B cell (primary cell): ENCODE measurements at regions of chr13 and their contacts with region 1.

Region 1: DNA sequence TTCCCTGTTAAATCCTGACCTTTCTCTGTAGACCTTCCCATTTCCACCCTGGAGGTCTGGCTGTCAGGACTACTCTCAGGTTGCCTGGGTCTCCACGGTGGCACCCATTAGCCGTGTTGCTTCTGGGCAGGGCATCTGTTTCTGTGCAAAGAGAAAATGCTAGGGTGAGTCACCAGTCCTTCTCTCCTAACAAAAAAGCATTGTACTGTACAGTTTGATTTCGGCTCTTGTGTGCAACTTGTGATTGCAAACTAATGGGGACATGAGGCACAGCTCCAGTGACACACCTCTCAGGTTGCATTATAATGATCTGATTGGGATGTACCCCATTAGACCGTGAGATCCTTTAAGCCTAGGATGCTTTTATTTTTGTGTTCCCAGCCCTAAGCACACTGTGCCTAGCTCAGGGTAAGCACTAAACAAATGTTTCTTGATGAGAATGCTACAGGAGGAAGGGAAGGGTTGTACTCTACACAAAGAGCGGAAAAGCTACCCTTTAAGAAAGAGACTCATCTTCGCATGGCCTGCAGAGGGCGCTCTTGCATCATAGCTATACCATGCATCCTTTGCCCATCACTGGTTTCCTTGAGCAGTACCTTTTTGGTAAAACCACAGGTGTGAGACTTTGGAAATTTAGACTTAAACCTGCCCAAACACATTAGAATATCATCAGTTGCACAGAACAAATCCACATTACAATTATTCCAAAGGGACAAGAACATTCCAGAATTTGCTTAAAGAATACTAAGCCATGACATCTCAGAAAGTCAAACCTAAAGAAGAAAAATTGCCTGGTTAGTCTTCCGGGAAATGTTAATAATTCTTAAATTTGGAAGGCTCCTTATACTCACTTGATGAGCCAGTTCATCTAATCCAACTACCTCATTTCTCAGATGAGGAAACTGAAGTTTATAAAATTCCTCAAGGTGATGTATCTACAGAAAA is 20.3 kb upstream of the TRIM13 start:
- DNase-seq: peak; percentile 86
- ATAC-seq: peak; percentile 78
- H3K4me3 ChIP-seq: no peak overlapping the region
- H3K4me3 Mint-ChIP-seq: no peak overlapping the region
- H3K27ac ChIP-seq: no peak overlapping the region
- H3K27ac Mint-ChIP-seq: no peak overlapping the region
- H3K4me1 ChIP-seq: peaks cover 0 to 4% of the 10 kb centered on the region in 2 donors
- H3K4me1 Mint-ChIP-seq: peaks cover 4% of the 10 kb centered on the region
- H3K27me3 ChIP-seq: no peaks in the 10 kb centered on the region
- H3K27me3 Mint-ChIP-seq: no peaks in the 10 kb centered on the region
- CTCF ChIP-seq: peak; percentile 98

Region 2: DNA sequence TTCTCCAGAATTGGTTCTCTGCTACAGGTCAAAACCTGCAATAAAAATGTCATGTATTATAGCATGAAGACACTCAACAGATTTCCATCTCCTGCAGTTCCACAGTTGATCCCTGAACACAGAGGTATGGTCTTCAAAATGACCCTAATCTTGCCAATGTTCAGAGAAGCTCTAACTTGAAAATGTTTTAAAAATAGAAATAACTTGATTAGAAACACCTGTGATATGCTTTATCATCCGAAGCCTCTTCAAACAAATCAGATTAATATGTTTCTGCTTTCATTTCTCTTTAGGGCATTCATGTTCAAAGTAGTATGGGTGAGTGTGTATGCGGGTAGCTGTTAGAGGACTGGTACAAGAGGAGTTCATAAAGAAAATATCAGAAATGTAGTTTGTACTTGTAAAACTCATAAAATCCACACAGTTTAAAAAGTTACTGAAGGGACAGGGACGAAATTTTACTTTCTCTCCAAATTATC is 99.1 kb after region 1 on chr13:
- CTCF ChIA-PET with region 1: interaction called, 10 read pairs
- POLR2A ChIA-PET with region 1: no interaction called
- intact Hi-C with region 1: loop called (anchors 5 kb)
- DNase-seq: peak; percentile 59
- ATAC-seq: peak; percentile 38
- H3K4me3 ChIP-seq: peak overlapping the region in 3 of 5 experiments; percentile 5 to 60 (median 8)
- H3K4me3 Mint-ChIP-seq: peak overlapping the region; percentile 78
- H3K27ac ChIP-seq: peak overlapping the region; percentile 35 to 74
- H3K27ac Mint-ChIP-seq: peak overlapping the region; percentile 76
- H3K4me1 ChIP-seq: peaks cover 10 to 57% of the 10 kb centered on the region in 2 donors
- H3K4me1 Mint-ChIP-seq: peaks cover 54% of the 10 kb centered on the region
- H3K27me3 ChIP-seq: no peaks in the 10 kb centered on the region
- H3K27me3 Mint-ChIP-seq: no peaks in the 10 kb centered on the region
- CTCF ChIP-seq: no peak

Region 3: GRCh38 chr13:50123862-50124536 is 147.4 kb after region 1 on chr13:
- CTCF ChIA-PET with region 1: interaction called, 14 read pairs
- POLR2A ChIA-PET with region 1: no interaction called
- intact Hi-C with region 1: no loop called
- DNase-seq: peak; percentile 84
- ATAC-seq: peak; percentile 62
- H3K4me3 ChIP-seq: peak overlapping the region; percentile 77 to 98 (median 98)
- H3K4me3 Mint-ChIP-seq: peak overlapping the region; percentile 92
- H3K27ac ChIP-seq: peak overlapping the region; percentile 73 to 98
- H3K27ac Mint-ChIP-seq: peak overlapping the region; percentile 96
- H3K4me1 ChIP-seq: peaks cover 50 to 54% of the 10 kb centered on the region in 2 donors
- H3K4me1 Mint-ChIP-seq: peaks cover 64% of the 10 kb centered on the region
- H3K27me3 ChIP-seq: peaks cover 0 to 12% (median 6%) of the 10 kb centered on the region in 4 experiments
- H3K27me3 Mint-ChIP-seq: peaks cover 7% of the 10 kb centered on the region
- CTCF ChIP-seq: no peak

Region 4: DNA sequence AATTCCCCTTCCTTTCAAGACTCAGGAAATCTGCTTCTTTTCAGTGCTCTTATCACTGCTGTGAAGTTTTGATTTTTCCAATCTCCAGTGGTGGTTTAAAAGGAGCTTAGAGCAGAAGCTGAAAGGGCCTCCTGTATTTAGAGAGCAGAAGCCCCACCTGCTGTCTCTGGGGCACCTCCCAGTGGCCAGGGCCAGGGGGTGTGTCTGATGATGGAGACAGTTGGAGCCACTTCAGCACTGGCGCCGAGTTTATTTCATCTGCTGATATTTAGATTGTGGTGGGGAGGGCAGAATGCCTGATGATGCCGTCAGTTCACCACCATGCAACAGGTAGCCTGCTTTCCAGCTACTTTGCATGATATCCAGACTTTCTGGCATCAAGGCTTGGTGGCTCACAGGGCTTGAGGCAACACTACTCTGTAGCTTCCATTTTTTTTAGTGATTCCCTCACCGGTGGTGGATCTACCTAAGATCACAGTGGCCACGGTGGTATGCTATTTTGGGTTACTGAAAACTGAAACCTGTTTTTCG is 410.5 kb after region 1 on chr13:
- CTCF ChIA-PET with region 1: interaction called, 5 read pairs
- POLR2A ChIA-PET with region 1: no interaction called
- intact Hi-C with region 1: loop called (anchors 1 kb)
- DNase-seq: peak; percentile 46
- ATAC-seq: peak; percentile 71
- H3K4me3 ChIP-seq: no peak overlapping the region
- H3K4me3 Mint-ChIP-seq: no peak overlapping the region
- H3K27ac ChIP-seq: no peak overlapping the region
- H3K27ac Mint-ChIP-seq: no peak overlapping the region
- H3K4me1 ChIP-seq: no peaks in the 10 kb centered on the region
- H3K4me1 Mint-ChIP-seq: peaks cover 7% of the 10 kb centered on the region
- H3K27me3 ChIP-seq: no peaks in the 10 kb centered on the region
- H3K27me3 Mint-ChIP-seq: no peaks in the 10 kb centered on the region
- CTCF ChIP-seq: peak; percentile 42

Region 5: DNA sequence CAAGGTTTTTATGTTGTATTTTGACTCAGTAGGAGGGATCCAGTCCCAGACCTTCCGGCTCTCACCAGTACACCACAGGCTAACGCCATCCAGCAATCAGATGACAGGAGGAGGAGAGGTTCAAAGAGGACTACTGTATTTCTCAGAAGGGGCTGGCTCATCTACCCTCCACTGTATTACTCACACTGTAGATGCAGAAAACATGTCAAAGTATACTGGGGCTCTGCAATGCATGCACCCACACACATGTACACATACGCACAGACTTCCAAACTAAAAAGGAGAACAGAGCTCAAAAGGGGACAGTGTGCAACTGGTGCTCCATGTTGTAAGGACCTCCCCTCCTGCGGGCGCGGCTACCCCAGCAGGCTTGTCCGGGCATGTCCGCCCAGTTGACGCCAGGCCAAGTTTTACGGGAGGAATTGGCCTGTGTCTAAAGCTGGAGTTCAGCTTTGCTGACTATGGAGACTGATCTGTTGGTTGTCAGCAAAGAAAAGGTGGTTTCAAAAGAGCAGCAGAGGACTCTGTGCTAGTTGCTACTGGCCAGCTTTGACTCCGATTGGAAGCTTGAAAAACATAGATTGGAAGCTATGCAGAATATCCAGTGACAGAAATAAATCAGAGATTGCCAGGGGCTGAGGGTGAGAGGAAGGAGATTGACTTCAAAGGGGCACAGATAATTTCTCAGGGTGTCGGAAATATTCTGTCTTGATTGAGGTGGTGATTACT is 552.7 kb after region 1 on chr13:
- CTCF ChIA-PET with region 1: interaction called, 7 read pairs
- POLR2A ChIA-PET with region 1: no interaction called
- intact Hi-C with region 1: loop called (anchors 2 kb)
- DNase-seq: no peak
- ATAC-seq: no peak
- H3K4me3 ChIP-seq: no peak overlapping the region
- H3K4me3 Mint-ChIP-seq: no peak overlapping the region
- H3K27ac ChIP-seq: no peak overlapping the region
- H3K27ac Mint-ChIP-seq: no peak overlapping the region
- H3K4me1 ChIP-seq: peaks cover 24 to 25% of the 10 kb centered on the region in 2 donors
- H3K4me1 Mint-ChIP-seq: peaks cover 35% of the 10 kb centered on the region
- H3K27me3 ChIP-seq: no peaks in the 10 kb centered on the region
- H3K27me3 Mint-ChIP-seq: no peaks in the 10 kb centered on the region
- CTCF ChIP-seq: no peak

Region 6: DNA sequence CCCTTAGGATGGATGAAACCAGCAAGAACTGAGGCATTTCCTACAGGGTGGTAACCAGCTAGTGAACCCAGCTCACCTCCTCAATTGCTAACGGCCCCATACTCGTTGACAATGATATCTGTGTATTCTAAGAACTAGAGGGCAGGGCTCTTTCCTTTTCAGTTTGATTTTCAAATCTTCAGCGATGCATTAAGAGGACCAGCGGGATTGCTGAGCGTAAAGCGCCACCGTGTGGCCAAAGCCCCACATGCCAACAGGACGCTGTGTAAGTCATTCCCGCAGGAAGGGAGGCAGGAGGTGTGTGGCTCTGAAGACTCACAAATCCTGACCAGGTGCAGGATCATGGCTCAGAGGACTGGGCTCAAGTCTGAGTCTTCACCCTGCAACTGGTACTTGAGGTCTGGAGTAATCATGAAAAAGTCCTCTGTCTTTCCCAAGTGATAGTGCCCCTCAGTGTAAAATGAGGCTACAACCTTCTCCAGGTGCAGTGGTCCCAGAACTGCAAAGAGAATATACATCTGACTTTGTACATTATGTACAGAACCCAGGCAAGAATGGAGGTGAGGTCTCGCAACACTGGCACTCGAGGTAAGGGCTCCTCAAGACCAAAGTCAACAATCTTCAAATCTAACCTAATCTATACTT is 1093.5 kb after region 1 on chr13:
- CTCF ChIA-PET with region 1: interaction called, 85 read pairs
- POLR2A ChIA-PET with region 1: no interaction called
- intact Hi-C with region 1: no loop called
- DNase-seq: peak; percentile 83
- ATAC-seq: peak; percentile 91
- H3K4me3 ChIP-seq: no peak overlapping the region
- H3K4me3 Mint-ChIP-seq: no peak overlapping the region
- H3K27ac ChIP-seq: no peak overlapping the region
- H3K27ac Mint-ChIP-seq: no peak overlapping the region
- H3K4me1 ChIP-seq: peaks cover 11 to 19% of the 10 kb centered on the region in 2 donors
- H3K4me1 Mint-ChIP-seq: peaks cover 12% of the 10 kb centered on the region
- H3K27me3 ChIP-seq: peaks cover 0 to 20% (median 10%) of the 10 kb centered on the region in 4 experiments
- H3K27me3 Mint-ChIP-seq: peaks cover 30% of the 10 kb centered on the region
- CTCF ChIP-seq: peak; percentile 97